HepG2 (cell line): ENCODE measurements at regions of chr17 and their contacts with region 1.

Region 1: DNA sequence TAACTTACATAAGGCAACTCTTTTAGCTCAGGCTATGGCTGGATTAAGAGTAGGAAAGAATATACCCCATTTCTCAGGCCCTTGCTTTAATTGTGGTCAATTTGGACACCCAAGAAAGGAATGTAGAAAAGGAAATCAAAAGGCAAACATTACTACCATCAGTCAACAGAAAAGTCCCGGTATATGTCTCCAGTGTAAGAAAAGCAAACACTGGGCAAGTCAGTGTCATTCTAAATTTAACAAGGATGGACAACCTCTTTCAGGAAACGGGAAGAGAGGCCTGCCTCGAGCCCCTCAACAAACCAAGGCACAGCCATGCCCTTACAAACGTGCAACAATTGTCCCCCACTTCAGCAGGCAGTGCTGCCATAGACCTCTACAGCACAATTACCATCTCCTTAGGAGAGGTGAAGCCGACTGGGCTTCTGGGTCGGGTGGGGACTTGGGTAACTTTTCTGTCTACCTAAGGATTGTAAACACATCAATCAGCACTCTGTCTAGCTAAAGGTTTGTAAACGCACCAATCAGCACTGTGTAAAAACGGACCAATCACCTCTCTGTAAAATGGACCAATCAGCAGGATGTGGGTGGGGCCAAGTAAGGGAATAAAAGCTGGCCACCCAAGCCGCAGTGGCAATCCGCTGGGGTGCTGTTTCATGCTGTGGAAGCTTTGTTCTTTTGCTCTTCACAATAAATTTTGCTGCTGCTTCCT is 12.4 kb downstream of the MRPL58 start:
- DNase-seq: peak; percentile 61
- ATAC-seq: peak; percentile 75
- H3K4me3 ChIP-seq: peak overlapping the region in 1 of 3 experiments; percentile 46; a peak in 3 of 6 replicates
- H3K27ac ChIP-seq: peak overlapping the region; percentile 43
- H3K4me1 ChIP-seq: peaks cover 25% of the 10 kb centered on the region
- H3K27me3 ChIP-seq: peaks cover 0 to 3% of the 10 kb centered on the region in 2 experiments; a peak in 1 of 5 replicates
- CTCF ChIP-seq: no peak
- EP300 ChIP-seq: no peak
- POLR2A ChIP-seq: peak; percentile 56 to 60; a peak in 2 of 4 replicates
- RAD21 ChIP-seq: no peak

Region 2: GRCh38 chr17:74833501-74834377 is 191.1 kb before region 1 on chr17:
- CTCF ChIA-PET with region 1: no interaction called
- POLR2A ChIA-PET with region 1: no interaction called
- in situ Hi-C with region 1: no loop called
- intact Hi-C with region 1: no loop called
- DNase-seq: no peak
- ATAC-seq: no peak
- H3K4me3 ChIP-seq: no peak overlapping the region
- H3K27ac ChIP-seq: no peak overlapping the region
- H3K4me1 ChIP-seq: peaks cover 15% of the 10 kb centered on the region
- H3K27me3 ChIP-seq: no peaks in the 10 kb centered on the region
- CTCF ChIP-seq: no peak
- EP300 ChIP-seq: no peak
- POLR2A ChIP-seq: no peak
- RAD21 ChIP-seq: no peak

Region 3: DNA sequence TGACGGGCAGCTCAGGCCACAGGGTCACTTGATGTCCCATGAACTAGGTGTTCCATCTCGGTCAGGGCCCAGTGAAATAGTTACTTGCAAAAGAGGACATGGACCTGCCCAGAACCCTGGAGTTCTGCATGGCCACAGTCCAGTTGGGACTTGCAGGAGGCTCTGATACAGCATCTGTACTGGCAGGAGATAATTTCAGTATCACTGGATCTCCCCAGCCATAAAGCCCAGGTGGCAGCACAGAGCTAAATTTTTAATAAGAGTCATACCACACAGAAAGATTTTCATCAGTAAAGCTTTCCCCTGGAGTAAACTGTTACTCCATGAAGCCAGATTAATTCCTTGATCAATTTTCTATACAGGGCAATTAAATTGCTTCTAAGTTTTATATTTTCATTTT is 44.9 kb after region 1 on chr17:
- CTCF ChIA-PET with region 1: no interaction called
- POLR2A ChIA-PET with region 1: interaction called, 4 read pairs
- in situ Hi-C with region 1: no loop called
- intact Hi-C with region 1: loop called (anchors 1 kb)
- DNase-seq: no peak
- ATAC-seq: peak; percentile 22; the same call in 1 of the 3 replicates
- H3K4me3 ChIP-seq: no peak overlapping the region
- H3K27ac ChIP-seq: no peak overlapping the region
- H3K4me1 ChIP-seq: peaks cover 36% of the 10 kb centered on the region
- H3K27me3 ChIP-seq: peaks cover 0 to 14% of the 10 kb centered on the region in 2 experiments; a peak in 3 of 5 replicates
- CTCF ChIP-seq: peak; percentile 54
- EP300 ChIP-seq: no peak
- POLR2A ChIP-seq: no peak
- RAD21 ChIP-seq: peak; percentile 52; the same call in 1 of the 2 replicates